ENCODE measurements at regions of chr17 and their contacts with region 1.

Region 1: GRCh38 chr17:5049314-5049895 is 14.2 kb upstream of the SLC52A1 start:
- DNase-seq: peak; percentile 84
- ATAC-seq: peak; percentile 87
- H3K4me3 Mint-ChIP-seq: no peak overlapping the region
- H3K27ac Mint-ChIP-seq: peak overlapping the region; percentile 78
- H3K4me1 Mint-ChIP-seq: peaks cover 49% of the 10 kb centered on the region
- H3K27me3 Mint-ChIP-seq: no peaks in the 10 kb centered on the region

Region 2: GRCh38 chr17:4980644-4981216 is 68.7 kb before region 1 on chr17:
- CTCF ChIA-PET with region 1: interaction called, 10 read pairs
- DNase-seq: peak; percentile 56
- ATAC-seq: peak; percentile 85
- H3K4me3 Mint-ChIP-seq: no peak overlapping the region
- H3K27ac Mint-ChIP-seq: peak overlapping the region; percentile 61
- H3K4me1 Mint-ChIP-seq: peaks cover 19% of the 10 kb centered on the region
- H3K27me3 Mint-ChIP-seq: no peaks in the 10 kb centered on the region

Region 3: DNA sequence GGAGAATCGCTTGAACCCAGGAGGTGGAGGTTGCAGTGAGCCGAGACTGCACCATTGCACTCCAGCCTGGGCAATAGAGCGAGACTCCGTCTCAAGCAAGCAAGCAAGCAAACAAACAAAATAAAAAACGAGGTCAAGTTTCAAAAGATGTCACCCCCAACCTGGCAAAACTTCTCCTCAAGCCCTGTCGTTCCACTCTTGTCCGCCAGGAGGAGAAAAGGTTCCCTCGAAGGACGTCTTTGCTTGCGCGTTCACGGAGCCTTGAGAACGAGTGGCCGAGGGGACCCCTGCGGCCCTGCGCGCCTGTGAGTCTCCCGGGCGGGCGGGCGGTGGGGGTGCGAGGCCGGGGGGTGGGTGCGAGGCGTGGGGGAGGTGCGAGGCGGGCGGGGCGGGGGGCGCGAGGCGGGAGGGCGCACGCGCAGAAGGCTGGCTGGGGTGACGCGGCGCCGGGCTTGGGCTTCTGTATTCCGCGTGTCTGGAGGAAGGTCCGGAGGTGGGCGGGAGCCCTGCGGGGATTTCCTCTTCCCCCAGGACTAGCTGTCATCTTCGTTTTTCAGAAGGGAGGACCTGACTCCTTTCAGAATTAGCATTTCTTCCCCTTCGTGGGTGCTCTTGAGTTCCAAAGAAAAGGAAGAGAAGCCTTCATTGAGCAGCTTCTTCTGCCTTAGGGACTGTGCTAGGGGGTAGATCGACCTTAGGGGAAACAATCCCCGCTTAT is 17.9 kb before region 1 on chr17:
- CTCF ChIA-PET with region 1: interaction called, 11 read pairs
- DNase-seq: peak; percentile 91
- ATAC-seq: peak; percentile 79
- H3K4me3 Mint-ChIP-seq: peak overlapping the region; percentile 80
- H3K27ac Mint-ChIP-seq: peak overlapping the region; percentile 93
- H3K4me1 Mint-ChIP-seq: peaks cover 25% of the 10 kb centered on the region
- H3K27me3 Mint-ChIP-seq: no peaks in the 10 kb centered on the region

Measured in activated CD8-positive, alpha-beta memory T cell treated with anti-CD3 and anti-CD28 coated beads, Interleukin-2, amount 10 ng/mL, durations not matched to agents 7 days and 5 days (primary cell).